A549 (cell line): ENCODE measurements at regions of chr5 and their contacts with region 1.

Region 1: DNA sequence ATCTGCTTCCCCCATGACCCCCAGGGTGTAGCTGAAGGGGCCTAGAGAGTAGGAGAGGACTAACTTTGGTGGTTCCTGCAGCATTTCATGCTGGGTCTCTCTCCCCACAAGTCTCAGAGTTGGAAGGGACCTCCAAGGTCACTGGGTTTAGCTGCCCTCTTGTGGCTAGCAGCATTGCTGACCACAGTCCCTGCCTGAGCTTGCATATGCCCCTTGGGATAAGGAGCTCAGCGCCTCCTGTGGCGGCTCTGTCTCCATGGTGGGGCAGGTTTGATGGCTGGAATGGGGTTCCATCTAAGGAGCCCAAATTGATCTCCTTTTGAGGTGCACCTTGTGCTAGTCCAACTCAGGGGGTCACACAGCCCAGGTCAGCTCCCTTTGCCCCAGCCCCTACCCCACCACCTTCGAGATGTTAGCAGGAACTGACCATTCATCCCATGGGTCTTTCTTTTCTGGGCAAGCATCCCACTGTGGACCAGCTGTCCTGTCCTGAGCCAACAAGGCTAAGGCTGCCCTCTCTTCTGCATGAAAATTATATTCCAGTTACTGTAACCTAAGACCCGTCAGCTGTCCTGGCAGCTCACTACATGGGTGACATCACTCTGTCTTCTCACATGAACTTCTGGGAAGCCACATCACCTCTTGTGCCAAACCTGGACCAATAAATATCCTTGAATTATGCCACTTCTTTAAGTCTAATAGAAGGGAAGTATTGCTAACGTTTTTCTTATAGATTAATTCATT is 196.2 kb downstream of the HSPA4 start:
- DNase-seq: peak; percentile 73 to 90
- ATAC-seq: peak; percentile 62 to 85; a peak in 5 of 6 replicates
- H3K4me3 ChIP-seq: no peak overlapping the region
- H3K27ac ChIP-seq: peak overlapping the region; percentile 89 to 94
- H3K4me1 ChIP-seq: peaks cover 74% of the 10 kb centered on the region
- CTCF ChIP-seq: peak; percentile 91
- EP300 ChIP-seq: no peak
- POLR2A ChIP-seq: no peak
- RAD21 ChIP-seq: peak; percentile 93 to 95

Region 2: GRCh38 chr5:133130387-133131118 is 117.5 kb before region 1 on chr5:
- CTCF ChIA-PET with region 1: interaction called, 11 read pairs
- POLR2A ChIA-PET with region 1: no interaction called
- DNase-seq: no peak
- ATAC-seq: no peak
- H3K4me3 ChIP-seq: no peak overlapping the region
- H3K27ac ChIP-seq: no peak overlapping the region
- H3K4me1 ChIP-seq: peaks cover 11% of the 10 kb centered on the region; the same call in 1 of the 3 replicates
- CTCF ChIP-seq: no peak
- EP300 ChIP-seq: no peak
- POLR2A ChIP-seq: no peak
- RAD21 ChIP-seq: no peak

Region 3: DNA sequence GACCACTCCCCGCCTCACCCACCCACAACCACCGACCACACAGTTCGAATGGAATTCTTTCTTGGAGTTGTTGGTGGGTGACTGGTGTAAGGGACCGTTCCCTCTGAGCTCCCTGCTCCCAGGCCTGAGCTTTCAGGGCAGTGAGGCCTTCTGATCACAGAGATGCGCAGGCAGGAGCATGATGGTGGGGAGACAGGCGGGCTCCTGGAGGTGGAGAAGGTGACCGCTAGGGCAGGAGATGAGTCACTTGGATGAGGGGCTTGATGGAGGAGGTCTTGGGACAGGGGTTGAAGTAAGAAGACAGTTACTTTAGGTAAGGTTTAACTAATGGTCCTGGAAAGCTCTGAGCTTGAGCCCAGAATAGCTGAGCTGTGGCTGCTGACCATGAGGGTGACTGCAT is 107.7 kb before region 1 on chr5:
- CTCF ChIA-PET with region 1: interaction called, 11 read pairs
- POLR2A ChIA-PET with region 1: no interaction called
- DNase-seq: no peak
- ATAC-seq: no peak
- H3K4me3 ChIP-seq: no peak overlapping the region
- H3K27ac ChIP-seq: no peak overlapping the region
- H3K4me1 ChIP-seq: no peaks in the 10 kb centered on the region
- CTCF ChIP-seq: no peak
- EP300 ChIP-seq: no peak
- POLR2A ChIP-seq: no peak
- RAD21 ChIP-seq: no peak

Region 4: DNA sequence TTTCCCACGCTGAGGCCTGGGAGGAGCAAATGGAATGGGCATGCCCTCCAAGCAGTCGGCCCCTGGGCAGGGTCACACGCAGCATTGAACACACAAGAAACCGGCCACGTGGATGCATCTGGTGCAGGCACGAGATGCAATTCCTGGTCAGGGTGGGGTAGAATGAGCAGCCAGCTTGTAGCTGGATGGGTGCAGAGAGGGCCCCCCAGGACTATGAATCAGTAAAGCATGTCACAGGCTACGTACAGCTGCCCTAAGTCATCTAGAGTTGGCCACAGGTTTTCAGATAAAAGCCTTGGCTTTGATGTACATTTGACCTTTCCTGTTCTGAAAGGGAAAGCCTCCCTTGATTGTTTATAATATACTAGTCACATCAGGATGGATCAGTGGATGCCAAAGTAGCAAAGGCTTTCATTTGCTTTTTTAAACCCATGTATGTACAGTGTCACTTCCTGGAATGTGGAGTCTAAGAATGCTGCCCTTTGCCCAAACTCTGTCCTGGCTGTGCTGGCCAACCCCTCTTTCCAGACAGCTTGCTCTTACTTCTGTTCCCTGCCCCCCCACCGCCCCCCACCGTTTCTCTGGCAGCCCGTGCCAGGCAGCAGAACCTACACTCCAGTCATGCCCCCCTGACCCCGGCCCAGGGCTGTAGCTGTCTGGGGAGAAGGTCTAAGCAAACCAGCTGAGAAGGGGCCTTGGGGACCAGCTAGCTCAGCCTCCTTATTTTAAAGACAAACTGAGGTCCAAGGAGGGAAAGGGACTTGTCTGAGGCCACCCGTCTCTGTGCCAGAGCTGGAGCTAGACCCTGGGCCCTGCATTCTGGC is 27.0 kb before region 1 on chr5:
- CTCF ChIA-PET with region 1: interaction called, 14 read pairs
- POLR2A ChIA-PET with region 1: no interaction called
- DNase-seq: peak in 1 of 2 experiments; percentile 32
- ATAC-seq: peak in 1 of 2 experiments; percentile 72; a peak in 3 of 6 replicates
- H3K4me3 ChIP-seq: no peak overlapping the region
- H3K27ac ChIP-seq: peak overlapping the region; percentile 66 to 75
- H3K4me1 ChIP-seq: peaks cover 33% of the 10 kb centered on the region
- CTCF ChIP-seq: no peak
- EP300 ChIP-seq: peak; percentile 19 to 35; a peak in 2 of 5 replicates
- POLR2A ChIP-seq: no peak
- RAD21 ChIP-seq: no peak

Region 5: GRCh38 chr5:133260715-133261114 is 12.7 kb after region 1 on chr5:
- CTCF ChIA-PET with region 1: interaction called, 25 read pairs
- POLR2A ChIA-PET with region 1: no interaction called
- DNase-seq: no peak
- ATAC-seq: peak; percentile 58 to 76; a peak in 5 of 6 replicates
- H3K4me3 ChIP-seq: no peak overlapping the region
- H3K27ac ChIP-seq: peak overlapping the region in 1 of 2 experiments; percentile 18; a peak in 1 of 6 replicates
- H3K4me1 ChIP-seq: no peaks in the 10 kb centered on the region
- CTCF ChIP-seq: peak; percentile 31; the same call in 2 of the 3 replicates
- EP300 ChIP-seq: no peak
- POLR2A ChIP-seq: no peak
- RAD21 ChIP-seq: peak; percentile 62 to 72

Region 6: DNA sequence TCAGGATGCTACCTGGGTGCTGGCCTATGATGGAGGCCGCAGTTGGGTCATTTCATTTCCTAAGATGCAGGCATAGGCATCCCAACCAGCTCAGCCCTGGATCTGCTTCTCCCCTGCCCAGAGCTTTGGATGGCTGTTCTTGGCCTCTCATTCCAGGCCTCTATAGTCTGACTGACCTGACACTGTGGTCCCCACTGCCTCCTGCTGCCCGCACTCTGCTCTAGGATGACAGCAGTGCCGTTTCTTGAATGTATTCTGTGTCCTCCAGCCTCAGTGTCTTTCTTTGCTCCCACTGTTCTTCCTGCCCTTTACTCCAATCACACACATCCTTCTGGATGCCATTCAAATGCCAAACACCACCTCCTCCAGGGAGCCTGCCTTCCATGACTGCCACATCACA is 39.4 kb after region 1 on chr5:
- CTCF ChIA-PET with region 1: interaction called, 39 read pairs
- POLR2A ChIA-PET with region 1: no interaction called
- DNase-seq: peak; percentile 39 to 53
- ATAC-seq: peak; percentile 63 to 82; a peak in 5 of 6 replicates
- H3K4me3 ChIP-seq: no peak overlapping the region
- H3K27ac ChIP-seq: no peak overlapping the region
- H3K4me1 ChIP-seq: peaks cover 43% of the 10 kb centered on the region
- CTCF ChIP-seq: peak; percentile 58
- EP300 ChIP-seq: no peak
- POLR2A ChIP-seq: no peak
- RAD21 ChIP-seq: peak; percentile 71 to 75